ENCODE measurements at regions of chr5 and their contacts with region 1.

Region 1: GRCh38 chr5:122192497-122193496 is 63.5 kb downstream of the ZNF474 start:
- DNase-seq: peak in 1 of 2 experiments; percentile 69
- H3K4me3 ChIP-seq: no peak overlapping the region
- H3K4me3 Mint-ChIP-seq: no peak overlapping the region
- H3K27ac Mint-ChIP-seq: no peak overlapping the region
- H3K4me1 ChIP-seq: no peaks in the 10 kb centered on the region
- H3K4me1 Mint-ChIP-seq: no peaks in the 10 kb centered on the region
- H3K27me3 ChIP-seq: no peaks in the 10 kb centered on the region
- H3K27me3 Mint-ChIP-seq: peaks cover 6% of the 10 kb centered on the region
- CTCF ChIP-seq: peak; percentile 54 to 66

Region 2: DNA sequence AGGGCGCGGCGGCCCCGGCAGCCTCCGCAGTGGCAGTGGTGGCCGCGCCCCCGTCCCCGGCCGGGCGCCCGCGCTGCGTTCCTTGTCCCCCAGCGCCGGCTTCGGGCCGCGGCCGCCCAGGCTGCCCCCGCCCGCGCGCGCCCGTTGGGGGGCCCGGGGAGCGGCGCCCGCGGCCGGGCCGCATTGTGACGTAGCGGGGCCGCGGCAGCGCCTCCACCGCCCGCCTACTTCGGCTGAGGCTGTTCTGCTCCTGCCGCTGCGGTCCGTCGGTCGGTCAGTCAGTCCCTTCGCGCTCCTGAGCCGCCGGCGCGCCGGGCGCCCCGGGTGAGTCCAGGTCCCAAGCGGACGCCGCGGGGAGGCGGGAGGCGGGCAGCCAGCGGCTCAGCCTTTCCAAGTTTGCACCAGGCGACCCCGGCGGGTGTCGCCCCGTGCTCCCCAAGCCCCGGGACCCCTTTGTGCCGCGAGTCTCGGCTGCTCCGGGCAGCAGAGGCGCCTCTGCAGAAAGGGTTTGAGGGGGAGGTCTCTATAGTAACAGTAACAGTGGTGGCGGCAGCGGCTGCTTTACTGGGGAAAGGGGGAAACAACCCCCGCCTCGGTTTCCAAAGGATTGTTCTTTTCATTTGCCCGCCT is 119.3 kb after region 1 on chr5 and contains the start of gene SNCAIP:
- CTCF ChIA-PET with region 1: no interaction called
- POLR2A ChIA-PET with region 1: no interaction called
- intact Hi-C with region 1: loop called (anchors 5 kb)
- DNase-seq: peak; percentile 56 to 63
- H3K4me3 ChIP-seq: peak within 1 kb of the TSS; percentile 43
- H3K4me3 Mint-ChIP-seq: peak within 1 kb of the TSS; percentile 75
- H3K27ac Mint-ChIP-seq: no peak within 1 kb of the TSS
- H3K4me1 ChIP-seq: no peaks in the 10 kb centered on the region
- H3K4me1 Mint-ChIP-seq: peaks cover 9% of the 10 kb centered on the region
- H3K27me3 ChIP-seq: no peaks in the 10 kb centered on the region
- H3K27me3 Mint-ChIP-seq: peaks cover 6% of the 10 kb centered on the region
- CTCF ChIP-seq: no peak
- total RNA-seq, gene SNCAIP: 1.0 and 1.2 TPM in 2 replicates

Region 3: GRCh38 chr5:122351416-122352157 is 158.8 kb after region 1 on chr5:
- CTCF ChIA-PET with region 1: no interaction called
- POLR2A ChIA-PET with region 1: no interaction called
- intact Hi-C with region 1: loop called (anchors 5 kb)
- DNase-seq: peak in 1 of 2 experiments; percentile 43
- H3K4me3 ChIP-seq: no peak overlapping the region
- H3K4me3 Mint-ChIP-seq: peak overlapping the region; percentile 31
- H3K27ac Mint-ChIP-seq: peak overlapping the region; percentile 56
- H3K4me1 ChIP-seq: peaks cover 25% of the 10 kb centered on the region
- H3K4me1 Mint-ChIP-seq: peaks cover 24% of the 10 kb centered on the region
- H3K27me3 ChIP-seq: no peaks in the 10 kb centered on the region
- H3K27me3 Mint-ChIP-seq: no peaks in the 10 kb centered on the region
- CTCF ChIP-seq: no peak

Measured in Caco-2 (cell line).